OCI-LY7 (cell line): ENCODE measurements at regions of chr17 and their contacts with region 1.

Region 1: GRCh38 chr17:77331301-77331864 is 190.6 kb downstream of the SEC14L1 start:
- DNase-seq: peak; percentile 98
- H3K4me3 ChIP-seq: peak overlapping the region; percentile 62
- H3K27ac ChIP-seq: peak overlapping the region; percentile 92
- H3K4me1 ChIP-seq: peaks cover 86% of the 10 kb centered on the region
- CTCF ChIP-seq: peak; percentile 99

Region 2: GRCh38 chr17:77319211-77320043 is 12.0 kb before region 1 on chr17:
- CTCF ChIA-PET with region 1: no interaction called
- POLR2A ChIA-PET with region 1: interaction called, 13 read pairs
- intact Hi-C with region 1: no loop called
- DNase-seq: peak; percentile 57
- H3K4me3 ChIP-seq: no peak overlapping the region
- H3K27ac ChIP-seq: peak overlapping the region; percentile 25
- H3K4me1 ChIP-seq: peaks cover 76% of the 10 kb centered on the region
- CTCF ChIP-seq: no peak

Region 3: DNA sequence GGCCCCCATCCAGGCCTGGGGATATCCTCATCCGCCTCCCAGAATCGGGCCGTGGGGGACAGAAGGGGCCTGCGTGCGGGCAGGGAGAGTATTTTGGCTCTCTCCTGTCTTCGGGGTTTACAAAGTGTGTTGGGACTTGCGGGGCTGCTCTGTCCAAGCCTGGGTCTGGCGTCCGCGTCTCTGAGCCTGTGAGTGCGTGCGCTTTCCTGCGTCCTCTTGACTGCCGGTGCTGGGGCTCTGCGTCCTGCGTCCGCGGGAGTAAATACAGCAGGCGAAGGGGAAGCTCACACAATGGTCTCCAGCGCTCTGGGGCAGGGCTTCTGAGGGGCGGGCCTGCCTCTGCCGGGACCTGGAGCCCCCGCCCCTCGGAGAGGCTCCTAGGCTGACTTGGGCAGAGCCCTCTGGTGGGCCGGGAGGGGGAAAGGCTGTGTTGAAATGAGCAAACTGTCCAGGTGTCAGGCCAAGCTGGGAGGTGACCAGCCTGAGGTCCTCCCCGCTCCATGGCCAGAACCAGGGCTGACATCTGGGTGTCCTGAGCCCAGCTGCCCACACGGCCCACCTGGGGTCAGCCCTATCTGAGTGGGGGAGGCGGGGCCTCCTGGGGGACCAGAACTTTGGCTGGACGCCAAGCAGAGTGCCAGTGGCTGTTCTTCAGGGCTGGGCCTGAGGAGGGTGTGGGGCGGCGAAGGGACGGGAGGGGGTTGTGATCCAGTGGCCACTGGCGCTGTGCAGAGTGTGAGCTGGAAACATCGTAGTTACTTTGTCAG is 43.0 kb after region 1 on chr17:
- CTCF ChIA-PET with region 1: no interaction called
- POLR2A ChIA-PET with region 1: no interaction called
- intact Hi-C with region 1: loop called (anchors 1 kb)
- DNase-seq: peak; percentile 78
- H3K4me3 ChIP-seq: peak overlapping the region; percentile 68
- H3K27ac ChIP-seq: no peak overlapping the region
- H3K4me1 ChIP-seq: peaks cover 45% of the 10 kb centered on the region
- CTCF ChIP-seq: peak; percentile 63

Region 4: GRCh38 chr17:77429919-77430752 is 98.8 kb after region 1 on chr17:
- CTCF ChIA-PET with region 1: interaction called, 11 read pairs
- POLR2A ChIA-PET with region 1: interaction called, 4 read pairs
- intact Hi-C with region 1: loop called (anchors 1 kb)
- DNase-seq: peak; percentile 89
- H3K4me3 ChIP-seq: peak overlapping the region; percentile 15
- H3K27ac ChIP-seq: peak overlapping the region; percentile 65
- H3K4me1 ChIP-seq: peaks cover 100% of the 10 kb centered on the region
- CTCF ChIP-seq: peak; percentile 99

Region 5: DNA sequence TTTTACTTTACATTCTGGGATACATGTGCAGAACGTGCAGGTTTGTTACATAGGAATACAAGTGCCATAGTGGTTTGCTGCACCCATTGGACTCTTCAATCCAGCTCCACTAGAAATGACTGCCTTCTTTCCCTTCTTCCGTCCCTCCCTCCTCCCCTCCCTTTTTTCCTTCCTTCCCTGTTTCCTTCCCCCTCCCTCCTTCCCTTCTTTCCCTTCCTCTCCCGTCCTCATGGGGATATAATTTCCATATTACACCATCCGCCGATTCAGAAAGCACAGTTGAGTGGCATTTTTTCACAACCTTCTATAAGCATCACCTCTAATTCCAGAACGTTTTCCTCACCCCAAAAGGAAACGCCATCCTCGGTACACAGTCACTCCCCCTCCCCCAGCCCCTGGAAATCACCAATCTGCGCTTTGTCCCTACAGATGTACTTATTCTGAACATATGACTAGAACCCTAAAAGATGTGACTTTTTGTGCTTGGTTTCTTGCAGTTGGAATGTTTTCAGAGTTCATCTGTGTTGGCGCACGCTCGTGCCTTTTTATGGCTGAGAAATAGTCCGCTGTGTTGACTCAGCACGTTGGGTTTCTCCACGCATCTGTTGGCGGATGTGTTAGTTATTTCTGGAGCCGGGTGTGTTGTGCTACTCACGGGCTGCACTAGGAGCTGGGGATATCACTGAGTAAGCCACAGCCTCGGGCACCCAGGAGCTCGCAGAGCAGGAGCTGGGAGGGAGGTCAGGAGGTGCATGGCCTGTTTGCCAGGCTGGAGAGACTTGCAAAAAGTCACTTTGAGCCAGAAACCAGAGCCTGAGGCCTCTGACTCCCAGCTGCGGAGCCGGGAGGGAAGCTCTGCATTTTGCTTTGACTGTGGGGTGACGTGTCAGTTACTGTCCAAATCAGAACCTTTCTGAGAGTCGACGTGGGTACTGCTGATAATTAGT is 145.8 kb after region 1 on chr17:
- CTCF ChIA-PET with region 1: no interaction called
- POLR2A ChIA-PET with region 1: no interaction called
- intact Hi-C with region 1: loop called (anchors 5 kb)
- DNase-seq: peak; percentile 70
- H3K4me3 ChIP-seq: peak overlapping the region; percentile 13
- H3K27ac ChIP-seq: peak overlapping the region; percentile 91
- H3K4me1 ChIP-seq: peaks cover 81% of the 10 kb centered on the region
- CTCF ChIP-seq: no peak